SK-N-SH (cell line): ENCODE measurements at regions of chr1 and their contacts with region 1.

Region 1: DNA sequence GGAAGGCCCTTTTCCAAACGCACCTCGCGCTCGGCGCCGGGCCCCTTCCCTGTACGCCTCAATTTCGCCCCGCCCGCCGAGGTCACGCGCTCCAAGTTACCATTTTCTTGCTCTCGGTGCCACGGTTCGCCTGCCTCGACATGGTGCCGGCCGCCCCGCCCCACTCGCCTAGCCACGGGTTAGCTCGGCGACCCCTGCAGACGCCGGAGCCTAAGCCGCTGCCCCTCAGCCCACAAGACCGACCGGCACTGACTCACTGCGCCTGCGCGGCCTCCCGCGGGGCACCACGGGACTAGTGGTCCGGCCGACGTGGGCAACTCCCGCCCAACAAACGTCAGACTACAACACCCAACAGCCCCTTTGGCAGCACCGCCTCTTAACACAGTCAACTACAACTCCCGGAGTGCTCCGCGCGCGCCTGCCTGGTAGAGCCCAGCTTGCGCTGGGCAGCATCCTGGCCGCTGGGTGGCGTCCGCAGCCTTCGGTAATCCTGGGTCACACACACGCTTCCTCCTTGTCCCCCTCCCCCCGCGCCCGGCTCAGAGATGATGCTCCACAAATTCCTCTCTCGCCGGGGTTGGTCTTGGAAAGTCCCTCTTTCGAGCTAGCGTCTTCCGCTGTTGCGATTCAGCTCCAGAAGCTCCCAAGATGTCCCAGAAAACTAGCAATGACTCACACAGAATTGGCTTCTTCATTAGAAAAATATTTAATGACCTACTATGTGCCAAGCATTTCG is at the start of gene TRAPPC3:
- DNase-seq: peak; percentile 98
- H3K4me3 ChIP-seq: peak within 1 kb of the TSS; percentile 72 to 73
- H3K27ac ChIP-seq: peak within 1 kb of the TSS; percentile 97 to 98
- H3K4me1 ChIP-seq: peaks cover 24 to 25% of the 10 kb centered on the region in 2 experiments
- H3K27me3 ChIP-seq: no peaks in the 10 kb centered on the region
- CTCF ChIP-seq: peak; percentile 98
- EP300 ChIP-seq: peak in 1 of 2 experiments; percentile 69; a peak in 1 of 4 replicates
- RAD21 ChIP-seq: peak; percentile 98
- polyA plus RNA-seq, gene TRAPPC3: 149 and 169 TPM in 2 replicates

Region 2: GRCh38 chr1:36134505-36135329 is 14.7 kb before region 1 on chr1:
- CTCF ChIA-PET with region 1: interaction called, 68 read pairs
- POLR2A ChIA-PET with region 1: no interaction called
- DNase-seq: peak; percentile 86
- H3K4me3 ChIP-seq: no peak overlapping the region; a peak in 1 of 4 replicates
- H3K27ac ChIP-seq: peak overlapping the region; percentile 45 to 89
- H3K4me1 ChIP-seq: peaks cover 14 to 43% of the 10 kb centered on the region in 2 experiments; a peak in 3 of 4 replicates
- H3K27me3 ChIP-seq: no peaks in the 10 kb centered on the region
- CTCF ChIP-seq: peak; percentile 88
- EP300 ChIP-seq: no peak
- RAD21 ChIP-seq: peak; percentile 92

Region 3: DNA sequence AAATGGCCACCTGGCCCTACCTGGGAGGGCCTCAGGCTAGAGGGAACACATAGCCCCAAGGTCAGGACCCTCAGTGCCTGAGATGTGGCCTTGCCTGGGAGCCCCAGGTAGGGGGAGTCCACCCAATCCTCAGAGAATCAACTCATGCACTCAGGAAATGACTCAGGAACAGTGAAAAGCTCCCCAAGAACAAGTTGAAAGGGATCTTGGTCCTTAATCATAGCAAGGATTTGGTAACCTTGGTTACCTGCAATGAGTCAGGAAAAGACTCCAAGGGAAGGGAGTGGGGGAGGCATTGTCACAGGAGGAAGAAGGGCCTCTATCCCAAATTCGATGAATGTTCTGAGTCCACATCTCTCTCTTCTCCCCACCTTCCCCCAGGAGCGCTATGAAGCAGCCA is 23.6 kb after region 1 on chr1:
- CTCF ChIA-PET with region 1: interaction called, 23 read pairs
- POLR2A ChIA-PET with region 1: no interaction called
- DNase-seq: no peak
- H3K4me3 ChIP-seq: peak overlapping the region in 1 of 2 experiments; percentile 17; a peak in 1 of 4 replicates
- H3K27ac ChIP-seq: peak overlapping the region in 1 of 2 experiments; percentile 78; a peak in 2 of 4 replicates
- H3K4me1 ChIP-seq: peaks cover 0 to 15% of the 10 kb centered on the region in 2 experiments; a peak in 2 of 4 replicates
- H3K27me3 ChIP-seq: no peaks in the 10 kb centered on the region
- CTCF ChIP-seq: no peak
- EP300 ChIP-seq: no peak
- RAD21 ChIP-seq: no peak

Region 4: GRCh38 chr1:36187800-36188593 is 38.6 kb after region 1 on chr1:
- CTCF ChIA-PET with region 1: interaction called, 143 read pairs
- POLR2A ChIA-PET with region 1: interaction called, 13 read pairs
- DNase-seq: peak; percentile 86
- H3K4me3 ChIP-seq: no peak overlapping the region; a peak in 1 of 4 replicates
- H3K27ac ChIP-seq: peak overlapping the region; percentile 67 to 71
- H3K4me1 ChIP-seq: peaks cover 0 to 8% of the 10 kb centered on the region in 2 experiments; a peak in 1 of 4 replicates
- H3K27me3 ChIP-seq: no peaks in the 10 kb centered on the region
- CTCF ChIP-seq: peak; percentile 84
- EP300 ChIP-seq: no peak
- RAD21 ChIP-seq: peak; percentile 96

Region 5: GRCh38 chr1:36223993-36224536 is 74.7 kb after region 1 on chr1 and contains the start of gene THRAP3:
- CTCF ChIA-PET with region 1: interaction called, 12 read pairs
- POLR2A ChIA-PET with region 1: interaction called, 5 read pairs
- DNase-seq: peak; percentile 97
- H3K4me3 ChIP-seq: peak within 1 kb of the TSS; percentile 69 to 77
- H3K27ac ChIP-seq: peak within 1 kb of the TSS; percentile 91 to 97
- H3K4me1 ChIP-seq: peaks cover 8 to 9% of the 10 kb centered on the region in 2 experiments; a peak in 2 of 4 replicates
- H3K27me3 ChIP-seq: no peaks in the 10 kb centered on the region
- CTCF ChIP-seq: no peak
- EP300 ChIP-seq: peak; percentile 8 to 38; a peak in 1 of 4 replicates
- RAD21 ChIP-seq: no peak
- polyA plus RNA-seq, gene THRAP3: 33.7 and 46.1 TPM in 2 replicates

Region 6: DNA sequence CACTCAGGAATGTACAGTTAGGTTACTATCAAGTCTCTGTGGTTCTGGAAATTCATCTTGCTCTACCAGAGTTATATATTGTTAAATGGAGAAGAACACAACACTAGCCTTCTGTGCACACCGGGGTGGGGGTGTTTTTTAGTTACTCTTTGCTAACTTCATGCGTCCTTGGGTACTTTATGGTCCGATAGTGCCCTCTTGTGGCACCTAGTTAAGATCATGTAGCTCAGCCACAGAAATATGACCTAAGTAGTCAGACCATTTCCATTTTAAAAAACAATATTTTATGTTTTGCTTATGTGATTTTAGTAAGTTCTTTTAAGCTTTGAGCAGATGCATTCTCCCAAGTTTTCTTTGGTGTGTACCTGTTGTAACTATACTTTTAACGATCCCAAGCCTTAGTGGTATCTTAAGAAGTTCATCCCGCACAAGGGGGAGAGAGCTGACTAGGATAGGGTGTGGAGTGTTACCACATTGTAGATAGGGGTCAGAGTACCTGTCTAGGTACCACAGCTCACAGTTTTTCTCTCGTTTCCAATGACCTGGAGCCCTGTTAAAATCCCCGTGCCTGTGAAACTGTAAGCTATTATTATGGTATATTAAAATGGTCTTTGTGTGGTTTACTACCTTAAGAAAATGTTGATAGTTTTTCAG is 136.2 kb after region 1 on chr1:
- CTCF ChIA-PET with region 1: interaction called, 103 read pairs
- POLR2A ChIA-PET with region 1: no interaction called
- DNase-seq: peak; percentile 69
- H3K4me3 ChIP-seq: peak overlapping the region in 1 of 2 experiments; percentile 0; a peak in 1 of 4 replicates
- H3K27ac ChIP-seq: peak overlapping the region; percentile 65 to 83; a peak in 3 of 4 replicates
- H3K4me1 ChIP-seq: peaks cover 0 to 29% of the 10 kb centered on the region in 2 experiments; a peak in 3 of 4 replicates
- H3K27me3 ChIP-seq: no peaks in the 10 kb centered on the region
- CTCF ChIP-seq: peak; percentile 88
- EP300 ChIP-seq: no peak
- RAD21 ChIP-seq: peak; percentile 83

Region 7: GRCh38 chr1:36306902-36307456 is 157.6 kb after region 1 on chr1:
- CTCF ChIA-PET with region 1: interaction called, 11 read pairs
- POLR2A ChIA-PET with region 1: interaction called, 6 read pairs
- DNase-seq: peak; percentile 99
- H3K4me3 ChIP-seq: peak overlapping the region; percentile 46 to 60
- H3K27ac ChIP-seq: peak overlapping the region in 1 of 2 experiments; percentile 34; a peak in 1 of 4 replicates
- H3K4me1 ChIP-seq: peaks cover 0 to 12% of the 10 kb centered on the region in 2 experiments; a peak in 2 of 4 replicates
- H3K27me3 ChIP-seq: no peaks in the 10 kb centered on the region
- CTCF ChIP-seq: no peak
- EP300 ChIP-seq: no peak
- RAD21 ChIP-seq: 0 out of 2 replicates have a peak, but pooled peaks have one; percentile 20

Region 8: DNA sequence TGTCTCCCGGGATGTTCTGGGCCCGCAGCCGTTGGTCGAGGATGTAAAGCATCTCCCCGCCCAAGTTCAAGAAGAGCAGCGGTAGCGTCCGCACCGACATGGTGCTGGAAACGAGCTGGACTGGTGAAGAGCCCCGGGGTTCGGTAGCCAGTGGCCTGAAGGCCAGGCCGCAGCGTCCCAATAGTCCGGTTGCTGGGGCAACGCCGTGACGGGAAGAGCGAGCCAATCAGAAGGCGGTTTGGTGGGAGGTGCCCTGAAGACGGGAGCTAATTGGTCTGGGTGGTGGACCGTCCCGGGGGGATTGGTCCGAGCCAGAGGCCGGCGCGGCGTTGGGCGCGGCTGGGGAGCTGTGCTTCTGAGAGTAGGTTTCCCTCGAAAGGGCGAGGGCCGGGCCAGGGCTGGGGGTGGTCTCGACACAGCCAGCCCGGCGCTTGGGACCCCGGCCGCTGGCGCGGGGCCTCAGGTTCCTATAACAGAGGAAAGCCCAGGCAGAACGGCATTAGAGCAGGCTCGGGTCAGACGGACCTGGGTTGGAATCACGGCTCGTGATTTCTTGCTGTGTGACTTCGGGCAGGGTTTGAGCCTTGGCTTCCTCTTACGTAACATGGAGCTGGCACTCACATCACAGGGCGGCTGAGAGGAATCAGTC is 301.0 kb after region 1 on chr1 and contains the start of gene OSCP1:
- CTCF ChIA-PET with region 1: no interaction called
- POLR2A ChIA-PET with region 1: no interaction called
- DNase-seq: peak; percentile 100
- H3K4me3 ChIP-seq: peak within 1 kb of the TSS; percentile 74 to 80
- H3K27ac ChIP-seq: peak within 1 kb of the TSS; percentile 91 to 94
- H3K4me1 ChIP-seq: peaks cover 0 to 8% of the 10 kb centered on the region in 2 experiments; a peak in 1 of 4 replicates
- H3K27me3 ChIP-seq: no peaks in the 10 kb centered on the region
- CTCF ChIP-seq: no peak
- EP300 ChIP-seq: no peak
- RAD21 ChIP-seq: no peak
- polyA plus RNA-seq, gene OSCP1: 11.9 and 15.2 TPM in 2 replicates